ENCODE measurements at regions of chr4 and their contacts with region 1.

Region 1: DNA sequence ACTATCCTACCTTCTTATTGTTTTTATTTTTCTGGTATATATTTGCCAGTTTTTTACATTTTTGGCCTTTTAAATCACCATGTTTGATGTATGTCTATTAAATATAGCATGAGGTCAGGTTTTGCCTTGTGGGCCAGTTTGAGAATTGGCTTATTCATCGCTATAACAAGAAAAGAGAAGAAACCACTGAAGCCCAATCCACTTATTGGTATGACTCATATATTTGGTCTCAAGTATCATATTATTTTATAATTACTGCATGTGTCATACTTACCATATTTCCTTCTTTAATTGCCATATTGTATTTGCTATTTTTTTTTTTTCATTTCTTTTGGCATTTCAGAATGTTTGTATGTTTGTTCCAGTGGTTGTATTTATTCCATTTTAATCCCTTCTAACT is 99.3 kb downstream of the IRF2 start:
- DNase-seq: peak; percentile 65
- ATAC-seq: peak; percentile 87
- H3K4me3 ChIP-seq: no peak overlapping the region
- H3K27ac ChIP-seq: peak overlapping the region; percentile 61
- H3K4me1 ChIP-seq: peaks cover 22% of the 10 kb centered on the region
- H3K27me3 ChIP-seq: no peaks in the 10 kb centered on the region
- CTCF ChIP-seq: no peak

Region 2: DNA sequence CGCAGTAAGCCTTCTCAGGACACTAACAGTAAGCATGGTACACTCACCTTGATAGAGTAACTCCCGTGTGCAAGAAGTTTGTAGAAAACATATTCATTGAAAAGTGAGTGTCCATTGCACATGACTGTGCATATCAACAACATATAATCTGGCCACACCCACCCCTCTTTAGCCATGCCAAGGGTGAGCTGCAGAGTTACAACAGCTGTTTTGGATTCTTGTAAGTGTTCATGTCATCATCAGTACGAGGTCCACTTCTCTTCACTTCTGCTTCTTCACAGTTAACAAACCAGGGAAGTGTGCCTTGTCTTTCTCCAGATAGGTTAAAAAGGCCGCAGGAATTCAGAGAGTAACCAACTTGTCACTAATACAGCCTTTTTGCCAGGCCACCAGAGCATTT is 17.3 kb before region 1 on chr4:
- CTCF ChIA-PET with region 1: no interaction called
- POLR2A ChIA-PET with region 1: no interaction called
- intact Hi-C with region 1: loop called (anchors 1 kb)
- DNase-seq: no peak
- ATAC-seq: no peak
- H3K4me3 ChIP-seq: no peak overlapping the region
- H3K27ac ChIP-seq: no peak overlapping the region
- H3K4me1 ChIP-seq: peaks cover 21% of the 10 kb centered on the region
- H3K27me3 ChIP-seq: no peaks in the 10 kb centered on the region
- CTCF ChIP-seq: no peak

Measured in PC-3 (cell line).